ENCODE measurements at regions of chr11 and their contacts with region 1.

Region 1: DNA sequence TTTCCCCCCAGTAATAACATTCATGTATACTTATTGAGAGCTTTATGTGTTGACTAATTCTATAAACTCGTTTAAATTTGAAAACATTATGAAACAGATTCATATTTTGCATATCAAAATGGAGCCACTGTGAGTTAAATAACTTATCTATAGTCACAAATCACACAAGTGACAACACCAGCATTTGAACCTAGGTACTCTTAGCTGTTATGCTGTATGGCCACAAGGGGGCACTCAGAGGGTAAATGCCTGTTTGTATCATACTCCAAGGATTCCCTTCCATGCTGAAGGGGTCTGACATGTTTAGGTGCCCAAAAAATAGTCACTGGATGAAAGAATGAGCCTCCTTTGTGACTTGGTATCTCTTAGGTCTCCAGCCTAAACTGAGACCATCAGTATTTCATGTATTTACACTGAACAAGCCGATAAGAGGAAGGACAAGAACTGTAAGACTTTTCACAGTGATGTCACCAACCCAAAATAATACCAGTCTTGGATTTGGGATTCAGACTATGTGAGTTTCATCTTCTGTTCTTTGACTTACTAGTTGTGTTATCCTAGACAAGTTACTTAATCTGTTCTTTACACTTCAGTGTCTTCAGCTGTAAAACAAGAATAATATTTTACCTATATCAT is 12.2 kb upstream of the OR52D1 start:
- DNase-seq: peak; percentile 38
- ATAC-seq: peak; percentile 88
- H3K4me3 ChIP-seq: no peak overlapping the region
- H3K27ac ChIP-seq: no peak overlapping the region
- H3K4me1 ChIP-seq: peaks cover 0 to 33% of the 10 kb centered on the region in 2 experiments; a peak in 2 of 4 replicates
- H3K27me3 ChIP-seq: no peaks in the 10 kb centered on the region
- CTCF ChIP-seq: peak; percentile 52 to 89 (median 82); a peak in 5 of 6 replicates
- POLR2A ChIP-seq: no peak
- RAD21 ChIP-seq: peak; percentile 38

Region 2: GRCh38 chr11:5489576-5490357 is 13.5 kb after region 1 on chr11:
- CTCF ChIA-PET with region 1: interaction called, 11 read pairs
- POLR2A ChIA-PET with region 1: no interaction called
- RAD21 ChIA-PET with region 1: no interaction called
- intact Hi-C with region 1: no loop called
- DNase-seq: no peak
- ATAC-seq: no peak
- H3K4me3 ChIP-seq: no peak overlapping the region
- H3K27ac ChIP-seq: no peak overlapping the region; the same call in 1 of the 2 replicates
- H3K4me1 ChIP-seq: peaks cover 0 to 73% of the 10 kb centered on the region in 2 experiments; a peak in 3 of 4 replicates
- H3K27me3 ChIP-seq: no peaks in the 10 kb centered on the region
- CTCF ChIP-seq: no peak
- POLR2A ChIP-seq: no peak
- RAD21 ChIP-seq: no peak

Region 3: DNA sequence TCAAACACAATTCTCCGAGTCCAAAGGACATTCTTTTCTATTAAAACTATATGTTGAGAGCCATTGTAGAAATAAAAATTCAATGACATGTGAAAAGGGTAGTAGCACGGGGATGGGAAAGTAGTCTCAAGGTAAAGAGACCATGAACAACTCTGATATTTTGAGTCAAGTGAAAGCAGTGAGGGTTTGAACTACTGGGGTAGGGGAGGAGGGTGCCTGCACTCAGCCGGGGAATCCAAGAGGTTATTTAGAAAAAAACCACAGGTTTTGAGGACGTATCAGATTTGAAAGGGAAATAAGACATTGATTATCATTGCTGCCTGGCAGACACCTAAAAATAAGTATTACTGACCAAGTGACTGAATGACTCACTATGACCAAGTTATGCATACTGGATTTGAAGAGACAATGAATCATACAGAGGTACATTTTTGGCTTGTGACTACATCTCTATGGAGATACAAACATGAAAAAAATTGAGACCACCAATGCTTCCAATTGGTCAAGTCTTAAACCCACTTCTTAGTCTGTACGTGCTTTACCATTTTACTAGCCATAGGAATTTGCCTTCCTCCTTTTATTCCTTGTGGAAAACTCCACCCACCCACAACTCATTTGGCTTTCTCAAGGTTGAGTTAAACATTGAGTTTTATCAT is 74.3 kb after region 1 on chr11:
- CTCF ChIA-PET with region 1: interaction called, 7 read pairs
- POLR2A ChIA-PET with region 1: no interaction called
- RAD21 ChIA-PET with region 1: no interaction called
- intact Hi-C with region 1: loop called (anchors 5 kb)
- DNase-seq: peak; percentile 54
- ATAC-seq: peak; percentile 82
- H3K4me3 ChIP-seq: peak overlapping the region in 1 of 2 experiments; percentile 8; a peak in 1 of 4 replicates
- H3K27ac ChIP-seq: no peak overlapping the region
- H3K4me1 ChIP-seq: peaks cover 3 to 13% of the 10 kb centered on the region in 2 experiments
- H3K27me3 ChIP-seq: peaks cover 16% of the 10 kb centered on the region
- CTCF ChIP-seq: no peak
- POLR2A ChIP-seq: no peak
- RAD21 ChIP-seq: no peak

Measured in HCT116 (cell line).